ENCODE measurements at regions of chr2 and their contacts with region 1.

Region 1: DNA sequence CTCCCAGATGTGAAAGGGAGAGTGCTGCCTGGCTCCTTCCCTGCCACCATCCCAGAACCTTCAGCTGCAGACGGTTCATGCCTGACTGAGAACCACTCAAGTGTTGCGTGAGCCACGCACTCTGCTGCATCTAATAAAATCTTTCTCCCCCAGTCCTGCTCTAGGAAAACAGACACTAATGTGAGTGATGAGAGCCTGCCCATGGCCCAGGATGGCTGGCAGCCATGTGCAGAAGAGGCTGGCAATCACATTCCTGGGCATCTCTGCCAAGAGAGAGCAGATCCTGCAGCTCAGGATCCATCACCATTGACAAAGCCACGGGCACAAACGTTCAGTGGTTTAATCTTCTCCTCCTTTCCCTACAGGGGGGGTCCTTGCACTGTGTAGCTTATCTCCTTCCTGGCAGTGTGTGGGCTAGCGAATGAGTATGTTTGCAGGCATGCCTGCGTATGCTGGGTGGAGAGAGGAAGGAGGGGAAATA is 477.5 kb downstream of the SLC4A3 start:
- DNase-seq: peak; percentile 78
- H3K4me3 ChIP-seq: no peak overlapping the region
- H3K27ac ChIP-seq: no peak overlapping the region
- H3K27me3 ChIP-seq: no peaks in the 10 kb centered on the region
- CTCF ChIP-seq: peak; percentile 76

Region 2: GRCh38 chr2:220224691-220225543 is 120.0 kb after region 1 on chr2:
- CTCF ChIA-PET with region 1: interaction called, 10 read pairs
- POLR2A ChIA-PET with region 1: interaction called, 3 read pairs
- DNase-seq: peak; percentile 68
- H3K4me3 ChIP-seq: no peak overlapping the region
- H3K27ac ChIP-seq: peak overlapping the region; percentile 89
- H3K27me3 ChIP-seq: no peaks in the 10 kb centered on the region
- CTCF ChIP-seq: no peak

Region 3: DNA sequence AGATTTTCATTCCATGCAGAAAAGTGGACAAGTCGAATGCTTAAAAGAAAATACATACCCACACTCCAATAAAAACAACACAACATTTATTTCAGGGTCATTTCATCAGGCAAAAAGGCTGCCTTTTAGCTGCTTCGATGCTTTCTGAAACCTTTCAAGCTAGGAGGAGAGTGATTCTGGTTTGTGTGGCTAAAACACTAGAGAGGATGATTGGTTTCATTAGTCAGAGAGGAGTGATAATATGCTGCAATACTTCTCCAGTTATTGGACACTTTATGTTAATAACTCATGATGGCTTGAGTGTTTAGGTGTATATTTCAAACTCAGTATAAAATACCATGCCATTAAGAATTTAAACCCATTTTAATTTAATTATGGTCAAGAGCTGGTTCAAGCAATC is 136.5 kb after region 1 on chr2:
- CTCF ChIA-PET with region 1: no interaction called
- POLR2A ChIA-PET with region 1: no interaction called
- DNase-seq: no peak
- H3K4me3 ChIP-seq: no peak overlapping the region
- H3K27ac ChIP-seq: no peak overlapping the region
- H3K27me3 ChIP-seq: no peaks in the 10 kb centered on the region
- CTCF ChIP-seq: no peak

Region 4: DNA sequence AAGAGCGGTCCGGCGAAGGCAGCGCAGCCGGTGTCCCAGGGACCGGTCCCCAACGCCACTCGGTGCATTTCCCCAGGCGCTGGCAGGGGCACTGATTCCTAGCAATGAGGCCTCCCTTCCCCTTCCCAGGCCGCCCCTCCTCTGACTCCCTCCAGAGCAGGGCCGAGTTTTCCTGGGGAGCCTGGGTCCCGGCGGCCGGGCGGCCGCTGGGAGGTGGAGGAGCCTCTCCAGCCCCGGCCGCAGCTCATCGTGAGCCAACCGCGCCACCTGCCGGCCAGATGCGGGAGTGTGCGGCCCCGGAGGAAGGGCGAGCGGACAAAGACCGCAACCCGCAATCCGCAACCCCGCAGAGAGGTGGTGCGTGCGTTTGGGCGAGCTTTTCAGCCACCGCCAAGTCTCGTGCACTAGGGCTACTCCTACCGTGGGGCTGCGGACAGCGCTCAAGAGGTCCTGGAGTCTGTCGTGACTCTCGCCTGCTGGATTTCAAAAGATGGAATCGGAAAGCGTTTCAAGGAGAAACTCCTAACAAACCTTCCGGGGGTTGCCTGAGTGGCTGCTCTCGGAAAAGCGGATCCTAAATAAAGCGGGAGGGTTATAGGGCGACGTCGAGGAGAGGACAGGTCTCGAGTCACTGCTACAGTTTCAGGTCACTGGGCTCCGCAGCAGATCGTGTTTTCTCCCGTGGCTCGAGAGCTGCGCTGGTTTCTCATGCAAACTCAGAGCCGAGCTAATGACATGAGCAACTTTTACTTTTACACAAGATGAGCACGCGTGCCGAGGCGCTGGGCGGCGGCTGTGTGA is 1468.7 kb after region 1 on chr2:
- CTCF ChIA-PET with region 1: interaction called, 11 read pairs
- POLR2A ChIA-PET with region 1: no interaction called
- DNase-seq: peak; percentile 50
- H3K4me3 ChIP-seq: peak overlapping the region; percentile 92
- H3K27ac ChIP-seq: peak overlapping the region; percentile 21
- H3K27me3 ChIP-seq: peaks cover 3% of the 10 kb centered on the region
- CTCF ChIP-seq: peak; percentile 95